ENCODE measurements at regions of chr5 and their contacts with region 1.

Region 1: GRCh38 chr5:122515709-122516431 is 203.8 kb downstream of the SNCAIP start:
- DNase-seq: peak; percentile 81
- ATAC-seq: peak; percentile 99
- H3K4me3 ChIP-seq: no peak overlapping the region
- H3K27ac ChIP-seq: no peak overlapping the region
- H3K4me1 ChIP-seq: no peaks in the 10 kb centered on the region
- H3K27me3 ChIP-seq: peaks cover 12% of the 10 kb centered on the region
- CTCF ChIP-seq: peak; percentile 87
- POLR2A ChIP-seq: no peak
- RAD21 ChIP-seq: peak; percentile 94

Region 2: DNA sequence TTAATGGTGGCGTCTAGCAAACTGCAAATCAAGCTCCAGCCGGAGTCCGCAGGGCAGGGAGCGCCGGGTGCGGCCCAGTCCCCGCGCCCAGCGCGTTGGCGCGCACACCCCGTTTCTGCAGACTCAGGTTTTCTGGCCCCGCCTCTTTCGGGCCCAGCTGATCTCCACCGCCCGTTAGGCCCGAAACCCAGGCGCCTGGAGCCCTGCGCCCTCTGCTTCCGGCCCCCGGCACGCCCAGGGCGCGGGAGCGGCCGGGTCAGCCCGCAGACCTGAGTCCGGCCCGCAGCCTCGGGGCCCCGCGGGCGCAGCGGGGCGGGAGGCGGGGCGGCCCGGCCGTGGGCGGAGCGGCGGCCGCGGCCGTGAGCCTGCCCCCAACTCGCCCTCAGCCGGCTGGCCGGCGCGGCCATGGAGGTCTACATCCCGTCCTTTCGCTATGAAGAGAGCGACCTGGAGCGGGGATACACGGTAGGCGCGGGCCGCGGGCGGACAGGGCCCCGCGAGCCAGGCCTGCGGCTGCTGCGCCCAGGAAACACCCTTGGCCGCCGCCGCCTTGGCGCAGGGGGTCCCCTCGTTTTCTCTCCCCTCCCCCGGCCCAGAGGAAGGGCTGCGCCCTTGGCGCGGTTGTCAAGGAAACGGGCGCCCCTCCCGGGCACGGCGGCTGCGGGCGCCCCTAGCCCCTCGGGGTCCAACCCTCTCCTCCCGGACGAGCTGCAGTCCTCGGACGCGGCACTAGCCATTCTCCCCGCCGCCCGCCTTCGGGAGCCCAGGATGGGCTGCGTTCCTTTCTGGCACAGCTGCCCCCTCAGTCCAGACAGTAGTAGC is 329.6 kb after region 1 on chr5 and contains the start of gene SNX24:
- CTCF ChIA-PET with region 1: no interaction called
- POLR2A ChIA-PET with region 1: no interaction called
- dilution Hi-C with region 1: no loop called
- in situ Hi-C with region 1: no loop called
- intact Hi-C with region 1: loop called (anchors 10 kb)
- DNase-seq: peak; percentile 56
- ATAC-seq: peak; percentile 96
- H3K4me3 ChIP-seq: peak within 1 kb of the TSS; percentile 98
- H3K27ac ChIP-seq: peak within 1 kb of the TSS; percentile 87
- H3K4me1 ChIP-seq: peaks cover 5% of the 10 kb centered on the region
- H3K27me3 ChIP-seq: no peaks in the 10 kb centered on the region
- CTCF ChIP-seq: no peak
- POLR2A ChIP-seq: peak; percentile 53; the same call in 1 of the 2 replicates
- RAD21 ChIP-seq: no peak
- total RNA-seq, gene SNX24: 13.8 and 21.7 TPM in 2 replicates

Region 3: GRCh38 chr5:123089914-123090670 is 574.2 kb after region 1 on chr5:
- CTCF ChIA-PET with region 1: no interaction called
- POLR2A ChIA-PET with region 1: no interaction called
- dilution Hi-C with region 1: no loop called
- in situ Hi-C with region 1: no loop called
- intact Hi-C with region 1: loop called (anchors 2 kb)
- DNase-seq: peak; percentile 27
- ATAC-seq: peak; percentile 52
- H3K4me3 ChIP-seq: peak overlapping the region; percentile 58
- H3K27ac ChIP-seq: peak overlapping the region; percentile 22; the same call in 1 of the 2 replicates
- H3K4me1 ChIP-seq: peaks cover 7% of the 10 kb centered on the region; the same call in 1 of the 2 replicates
- H3K27me3 ChIP-seq: peaks cover 61% of the 10 kb centered on the region
- CTCF ChIP-seq: no peak
- POLR2A ChIP-seq: no peak
- RAD21 ChIP-seq: no peak

Region 4: DNA sequence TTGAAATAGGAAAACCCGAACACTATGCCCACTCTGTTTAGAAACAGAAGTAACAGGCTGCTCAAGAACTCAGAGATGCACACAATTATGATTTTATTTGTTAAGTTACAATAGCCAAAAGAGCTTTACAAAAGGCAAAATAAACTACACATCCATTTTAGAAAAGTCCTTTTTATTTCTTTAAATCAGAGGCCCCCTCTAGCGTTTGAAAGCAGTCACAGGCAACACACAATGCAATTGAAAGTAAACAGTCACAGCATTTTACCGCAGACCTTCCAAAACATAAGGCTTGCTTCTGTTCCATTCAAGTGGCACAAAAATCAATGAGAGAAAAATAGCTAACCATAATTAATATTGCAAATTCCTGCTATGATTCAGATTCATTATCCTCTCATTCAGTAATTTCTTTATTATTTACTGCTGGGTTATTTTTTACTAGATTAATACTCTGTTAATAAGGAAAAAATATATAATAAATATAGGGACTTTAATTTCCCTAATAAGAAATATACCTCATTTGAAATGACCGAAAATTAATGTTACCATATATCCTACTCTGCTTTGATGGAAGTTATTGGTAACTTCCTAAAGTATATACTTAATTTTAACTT is 829.1 kb after region 1 on chr5:
- CTCF ChIA-PET with region 1: interaction called, 3 read pairs
- POLR2A ChIA-PET with region 1: no interaction called
- dilution Hi-C with region 1: no loop called
- in situ Hi-C with region 1: no loop called
- intact Hi-C with region 1: loop called (anchors 5 kb)
- DNase-seq: peak; percentile 52
- ATAC-seq: peak; percentile 79
- H3K4me3 ChIP-seq: no peak overlapping the region
- H3K27ac ChIP-seq: no peak overlapping the region
- H3K4me1 ChIP-seq: no peaks in the 10 kb centered on the region
- H3K27me3 ChIP-seq: no peaks in the 10 kb centered on the region
- CTCF ChIP-seq: peak; percentile 83
- POLR2A ChIP-seq: no peak
- RAD21 ChIP-seq: peak; percentile 71

Region 5: GRCh38 chr5:123371575-123372179 is 855.8 kb after region 1 on chr5:
- CTCF ChIA-PET with region 1: no interaction called
- POLR2A ChIA-PET with region 1: no interaction called
- dilution Hi-C with region 1: no loop called
- in situ Hi-C with region 1: no loop called
- intact Hi-C with region 1: loop called (anchors 2 kb)
- DNase-seq: peak; percentile 7
- ATAC-seq: no peak
- H3K4me3 ChIP-seq: no peak overlapping the region
- H3K27ac ChIP-seq: no peak overlapping the region
- H3K4me1 ChIP-seq: no peaks in the 10 kb centered on the region
- H3K27me3 ChIP-seq: no peaks in the 10 kb centered on the region
- CTCF ChIP-seq: peak; percentile 49
- POLR2A ChIP-seq: no peak
- RAD21 ChIP-seq: peak; percentile 40

Region 6: GRCh38 chr5:123423278-123424149 is 907.6 kb after region 1 on chr5 and contains the start of gene CEP120:
- CTCF ChIA-PET with region 1: no interaction called
- POLR2A ChIA-PET with region 1: no interaction called
- dilution Hi-C with region 1: no loop called
- in situ Hi-C with region 1: no loop called
- intact Hi-C with region 1: loop called (anchors 1 kb)
- DNase-seq: peak; percentile 99
- ATAC-seq: peak; percentile 99
- H3K4me3 ChIP-seq: peak within 1 kb of the TSS; percentile 87
- H3K27ac ChIP-seq: peak within 1 kb of the TSS; percentile 68
- H3K4me1 ChIP-seq: no peaks in the 10 kb centered on the region; the same call in 1 of the 2 replicates
- H3K27me3 ChIP-seq: no peaks in the 10 kb centered on the region
- CTCF ChIP-seq: peak; percentile 94
- POLR2A ChIP-seq: peak; percentile 65; the same call in 1 of the 2 replicates
- RAD21 ChIP-seq: peak; percentile 64
- total RNA-seq, gene CEP120: 16.4 and 46.1 TPM in 2 replicates

Region 7: DNA sequence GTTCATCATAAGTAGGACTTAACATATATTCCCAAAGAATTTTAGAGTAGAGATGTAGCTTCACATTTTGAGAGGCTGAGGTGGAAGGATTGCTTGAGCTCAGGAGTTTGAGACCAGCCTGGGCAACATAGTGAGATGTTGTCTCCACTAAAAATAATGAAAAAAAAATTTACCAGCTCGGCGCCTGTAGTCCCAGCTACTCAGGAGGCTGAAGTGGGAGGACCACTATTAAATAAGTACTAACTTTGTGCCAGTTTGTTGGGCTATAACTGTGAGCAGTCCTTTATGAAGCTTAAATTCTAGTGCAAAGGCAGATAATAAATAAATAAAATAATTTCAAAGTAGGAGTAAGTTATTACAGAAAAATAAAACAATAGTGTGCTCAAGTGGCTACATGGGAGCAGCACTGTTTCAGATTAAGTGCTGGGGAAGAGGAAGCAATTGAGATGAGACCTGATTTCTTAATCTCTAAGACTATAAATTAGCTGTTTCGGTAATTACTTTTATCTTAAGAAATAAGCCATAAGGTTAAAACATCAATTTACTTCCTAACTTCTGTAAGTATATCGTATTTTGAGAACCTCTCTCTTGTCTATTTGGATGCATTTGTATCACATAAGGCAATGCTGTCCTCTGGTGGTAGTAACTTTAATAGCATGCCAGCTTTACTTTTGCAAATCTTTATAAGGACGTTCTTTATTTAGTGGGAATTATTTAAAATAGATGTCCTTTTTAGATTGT is 1095.0 kb after region 1 on chr5:
- CTCF ChIA-PET with region 1: no interaction called
- POLR2A ChIA-PET with region 1: no interaction called
- dilution Hi-C with region 1: no loop called
- in situ Hi-C with region 1: loop called (anchors 25 kb)
- intact Hi-C with region 1: loop called (anchors 5 kb)
- DNase-seq: peak; percentile 80
- ATAC-seq: peak; percentile 81
- H3K4me3 ChIP-seq: no peak overlapping the region
- H3K27ac ChIP-seq: no peak overlapping the region
- H3K4me1 ChIP-seq: no peaks in the 10 kb centered on the region
- H3K27me3 ChIP-seq: no peaks in the 10 kb centered on the region
- CTCF ChIP-seq: peak; percentile 98
- POLR2A ChIP-seq: no peak
- RAD21 ChIP-seq: peak; percentile 93

Region 8: GRCh38 chr5:124504081-124504916 is 1988.4 kb after region 1 on chr5:
- CTCF ChIA-PET with region 1: no interaction called
- POLR2A ChIA-PET with region 1: no interaction called
- dilution Hi-C with region 1: no loop called
- in situ Hi-C with region 1: no loop called
- intact Hi-C with region 1: no loop called
- DNase-seq: peak; percentile 11
- ATAC-seq: no peak
- H3K4me3 ChIP-seq: no peak overlapping the region
- H3K27ac ChIP-seq: no peak overlapping the region
- H3K4me1 ChIP-seq: no peaks in the 10 kb centered on the region
- H3K27me3 ChIP-seq: no peaks in the 10 kb centered on the region
- CTCF ChIP-seq: no peak
- POLR2A ChIP-seq: no peak
- RAD21 ChIP-seq: no peak